ENCODE measurements at regions of chr5 and their contacts with region 1.

Region 1: GRCh38 chr5:143403593-143404415 is at the start of gene NR3C1:
- DNase-seq: peak; percentile 87
- H3K4me3 Mint-ChIP-seq: peak within 1 kb of the TSS; percentile 87
- H3K27ac Mint-ChIP-seq: peak within 1 kb of the TSS; percentile 98
- H3K4me1 Mint-ChIP-seq: peaks cover 53% of the 10 kb centered on the region
- H3K27me3 Mint-ChIP-seq: no peaks in the 10 kb centered on the region

Region 2: GRCh38 chr5:143435210-143435657 is 31.4 kb after region 1 on chr5:
- CTCF ChIA-PET with region 1: interaction called, 19 read pairs
- DNase-seq: peak; percentile 46
- H3K4me3 Mint-ChIP-seq: peak overlapping the region; percentile 81
- H3K27ac Mint-ChIP-seq: peak overlapping the region; percentile 93
- H3K4me1 Mint-ChIP-seq: peaks cover 38% of the 10 kb centered on the region
- H3K27me3 Mint-ChIP-seq: no peaks in the 10 kb centered on the region

Region 3: DNA sequence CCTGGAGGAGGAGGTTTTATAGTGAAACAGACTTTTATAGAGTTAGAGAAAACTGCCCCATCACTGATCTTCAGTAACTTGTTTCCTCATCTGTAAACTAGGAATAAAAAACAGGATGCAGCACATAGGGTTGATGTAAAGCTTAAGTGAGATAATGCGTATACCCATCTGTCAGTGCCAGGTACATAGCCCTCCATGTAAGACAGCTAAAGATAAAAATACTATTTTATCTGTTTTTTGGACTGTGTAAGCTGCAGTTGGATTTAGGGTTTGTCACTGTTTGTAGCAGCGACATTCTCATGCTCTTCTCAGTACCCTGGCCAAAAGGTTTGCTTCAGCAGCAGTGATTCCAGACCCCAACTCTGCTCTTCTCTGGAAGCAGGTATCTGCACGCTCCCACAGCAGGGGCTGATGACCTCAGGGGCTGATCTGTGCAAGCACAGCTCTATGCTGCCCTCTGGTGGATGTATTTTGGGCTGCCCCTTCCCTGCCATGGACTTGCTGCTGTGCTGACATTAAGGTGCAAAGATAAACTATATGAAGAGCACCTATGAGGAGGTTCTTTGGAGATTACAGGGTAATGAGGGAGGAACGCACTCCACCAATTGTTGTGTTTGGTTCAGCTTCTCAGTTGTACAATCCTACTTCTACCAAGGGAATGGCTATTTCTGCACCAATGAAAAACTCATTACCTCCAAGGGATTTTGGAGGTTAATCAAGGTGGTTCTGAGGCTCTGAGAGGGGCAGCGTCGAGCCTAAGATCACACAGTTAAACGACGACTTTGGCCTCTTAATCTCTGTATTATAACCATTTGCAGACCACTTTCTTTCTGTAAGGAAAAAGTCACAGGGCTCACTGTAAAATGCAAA is 421.3 kb after region 1 on chr5:
- CTCF ChIA-PET with region 1: interaction called, 16 read pairs
- DNase-seq: peak; percentile 87
- H3K4me3 Mint-ChIP-seq: no peak overlapping the region
- H3K27ac Mint-ChIP-seq: no peak overlapping the region
- H3K4me1 Mint-ChIP-seq: peaks cover 21% of the 10 kb centered on the region
- H3K27me3 Mint-ChIP-seq: no peaks in the 10 kb centered on the region

Measured in activated naive CD4-positive, alpha-beta T cell treated with anti-CD3 and anti-CD28 coated beads, Interleukin-2, amount 10 ng/mL, durations not matched to agents 7 days and 5 days (primary cell).